B cell (primary cell): ENCODE measurements at regions of chr4 and their contacts with region 1.

Region 1: DNA sequence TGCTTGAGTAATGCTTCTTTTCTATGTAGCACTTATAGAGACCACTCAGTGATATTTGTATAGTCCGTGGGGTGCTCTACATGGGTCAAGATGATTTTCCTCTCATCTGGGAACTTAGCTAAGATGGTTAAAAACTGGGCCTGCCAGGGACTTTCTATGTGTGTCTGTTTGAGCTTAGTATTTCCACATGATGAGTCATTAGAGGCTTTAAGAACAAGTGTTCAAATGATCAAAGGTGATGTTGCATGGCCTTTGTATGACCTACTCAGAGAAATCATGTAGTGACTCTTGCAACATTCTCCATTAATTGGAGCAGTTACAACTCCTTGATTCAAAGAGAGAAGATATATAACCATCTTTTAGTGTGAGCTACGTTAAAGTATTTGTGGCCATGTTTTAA is 1480.5 kb upstream of the IGFBP7 start:
- DNase-seq: no peak
- ATAC-seq: no peak
- H3K4me3 ChIP-seq: no peak overlapping the region
- H3K4me3 Mint-ChIP-seq: no peak overlapping the region
- H3K27ac ChIP-seq: no peak overlapping the region
- H3K27ac Mint-ChIP-seq: no peak overlapping the region
- H3K4me1 ChIP-seq: no peaks in the 10 kb centered on the region
- H3K4me1 Mint-ChIP-seq: no peaks in the 10 kb centered on the region
- H3K27me3 ChIP-seq: no peaks in the 10 kb centered on the region
- H3K27me3 Mint-ChIP-seq: no peaks in the 10 kb centered on the region
- CTCF ChIP-seq: no peak

Region 2: DNA sequence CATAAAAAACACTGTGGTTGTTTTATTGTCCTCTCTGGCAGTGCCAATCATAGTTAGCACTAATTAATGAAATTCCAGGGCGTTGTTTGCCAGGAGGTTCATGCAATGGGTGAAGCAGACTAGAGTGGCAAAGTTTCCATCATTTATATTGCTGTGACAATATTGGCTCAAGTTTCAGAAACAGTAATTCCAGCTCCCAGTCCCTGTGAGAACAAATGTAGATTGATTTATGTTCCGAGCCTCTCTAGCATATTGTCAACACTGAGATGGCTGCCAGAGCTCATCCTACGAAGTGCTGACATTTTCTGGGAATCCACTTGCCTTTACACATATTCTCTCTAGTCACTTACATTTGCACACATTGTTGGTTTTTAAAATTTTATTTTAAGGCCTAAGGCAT is 1040.5 kb before region 1 on chr4:
- CTCF ChIA-PET with region 1: no interaction called
- POLR2A ChIA-PET with region 1: no interaction called
- intact Hi-C with region 1: no loop called
- DNase-seq: no peak
- ATAC-seq: no peak
- H3K4me3 ChIP-seq: no peak overlapping the region
- H3K4me3 Mint-ChIP-seq: no peak overlapping the region
- H3K27ac ChIP-seq: no peak overlapping the region
- H3K27ac Mint-ChIP-seq: no peak overlapping the region
- H3K4me1 ChIP-seq: no peaks in the 10 kb centered on the region
- H3K4me1 Mint-ChIP-seq: no peaks in the 10 kb centered on the region
- H3K27me3 ChIP-seq: no peaks in the 10 kb centered on the region
- H3K27me3 Mint-ChIP-seq: no peaks in the 10 kb centered on the region
- CTCF ChIP-seq: no peak

Region 3: GRCh38 chr4:58636381-58636780 is 45.7 kb after region 1 on chr4:
- CTCF ChIA-PET with region 1: no interaction called
- POLR2A ChIA-PET with region 1: no interaction called
- intact Hi-C with region 1: loop called (anchors 5 kb)
- DNase-seq: no peak
- ATAC-seq: no peak
- H3K4me3 ChIP-seq: no peak overlapping the region
- H3K4me3 Mint-ChIP-seq: no peak overlapping the region
- H3K27ac ChIP-seq: no peak overlapping the region
- H3K27ac Mint-ChIP-seq: no peak overlapping the region
- H3K4me1 ChIP-seq: no peaks in the 10 kb centered on the region
- H3K4me1 Mint-ChIP-seq: no peaks in the 10 kb centered on the region
- H3K27me3 ChIP-seq: no peaks in the 10 kb centered on the region
- H3K27me3 Mint-ChIP-seq: no peaks in the 10 kb centered on the region
- CTCF ChIP-seq: no peak